BJ (cell line): ENCODE measurements at regions of chr2 and their contacts with region 1.

Region 1: GRCh38 chr2:38935568-38936172 is 46.0 kb downstream of the ARHGEF33 start:
- DNase-seq: no peak
- H3K4me3 ChIP-seq: no peak overlapping the region
- H3K27me3 ChIP-seq: no peaks in the 10 kb centered on the region
- CTCF ChIP-seq: no peak

Region 2: DNA sequence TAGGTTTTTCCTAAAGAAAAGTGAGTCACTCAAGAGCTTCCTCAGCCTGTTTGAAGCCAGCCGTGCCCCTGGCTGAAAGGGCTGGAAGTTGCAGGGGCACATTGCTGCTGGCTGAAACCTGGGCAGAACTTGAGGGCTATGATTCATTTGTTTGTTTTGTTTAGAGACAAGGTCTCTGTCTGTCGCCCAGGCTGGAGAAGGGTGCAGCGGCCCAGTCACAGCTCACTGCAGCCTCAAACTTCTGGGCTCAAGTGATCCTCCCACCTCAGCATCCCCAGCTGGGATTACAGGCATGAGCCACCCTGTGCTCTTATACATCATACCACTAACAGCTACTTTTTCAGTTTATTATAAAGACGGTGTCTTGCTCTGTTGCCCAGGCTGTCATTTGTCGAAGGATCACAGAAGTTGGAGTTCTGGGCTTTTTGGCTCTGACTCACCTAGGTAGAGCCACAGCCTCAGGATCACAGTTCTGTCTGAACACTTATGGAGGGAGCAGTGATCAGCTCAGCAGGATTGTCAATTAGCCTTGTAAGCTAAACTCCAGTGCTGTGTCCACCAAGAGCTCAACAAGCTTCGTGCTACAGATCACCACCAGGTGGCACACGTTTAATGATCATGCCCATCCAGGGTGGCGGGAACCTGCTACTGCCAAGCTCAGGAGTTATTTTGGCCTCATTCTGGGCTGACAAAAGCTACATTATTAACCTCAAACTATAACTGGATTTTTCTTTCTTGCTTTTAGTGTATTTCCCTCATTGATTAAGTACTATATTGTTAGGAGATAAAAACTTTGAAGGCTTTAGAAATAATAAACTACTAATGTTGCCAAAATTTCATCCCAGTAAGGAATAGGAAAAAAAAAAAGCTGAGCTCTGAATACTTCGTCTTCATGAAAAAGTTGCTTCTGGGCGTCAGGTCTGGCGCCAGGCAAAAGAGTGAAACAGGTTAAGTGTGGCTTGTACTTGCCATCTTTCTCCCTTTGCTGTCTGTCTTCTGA is 11.9 kb after region 1 on chr2:
- CTCF ChIA-PET with region 1: interaction called, 19 read pairs
- POLR2A ChIA-PET with region 1: no interaction called
- DNase-seq: no peak
- H3K4me3 ChIP-seq: no peak overlapping the region
- H3K27me3 ChIP-seq: no peaks in the 10 kb centered on the region
- CTCF ChIP-seq: peak; percentile 67